Ovary (tissue), 10 donors: ENCODE measurements at regions of chr17 and their contacts with region 1.

Region 1: GRCh38 chr17:4733073-4733531 is 1.9 kb downstream of the MED11 start:
- DNase-seq: no peak
- H3K4me3 ChIP-seq: no peak overlapping the region
- H3K27ac ChIP-seq: no peak overlapping the region
- H3K4me1 ChIP-seq: peaks cover 2% of the 10 kb centered on the region
- H3K27me3 ChIP-seq: no peaks in the 10 kb centered on the region
- CTCF ChIP-seq: no peak
- EP300 ChIP-seq: no peak
- POLR2A ChIP-seq: no peak

Region 2: GRCh38 chr17:4903051-4903818 is 170.1 kb after region 1 on chr17 and contains the start of gene CHRNE:
- intact Hi-C with region 1: loop called in 1 of 4 experiments (anchors 5 kb)
- DNase-seq: peak; percentile 66 to 89 (median 78)
- H3K4me3 ChIP-seq: no peak within 1 kb of the TSS
- H3K27ac ChIP-seq: peak within 1 kb of the TSS; percentile 27 to 61
- H3K4me1 ChIP-seq: peaks cover 11% of the 10 kb centered on the region
- H3K27me3 ChIP-seq: no peaks in the 10 kb centered on the region
- CTCF ChIP-seq: peak; percentile 52 to 82 (median 82)
- EP300 ChIP-seq: no peak
- POLR2A ChIP-seq: no peak
- total RNA-seq, gene CHRNE: 0.34 to 1.4 (median 1.0) TPM